ENCODE measurements at regions of chr2 and their contacts with region 1.

Region 1: GRCh38 chr2:75676464-75676863 is 29.9 kb downstream of the MRPL19 start:
- DNase-seq: no peak
- H3K4me3 ChIP-seq: no peak overlapping the region
- H3K27ac ChIP-seq: no peak overlapping the region
- H3K4me1 ChIP-seq: no peaks in the 10 kb centered on the region
- CTCF ChIP-seq: no peak

Region 2: GRCh38 chr2:75375646-75376582 is 300.6 kb before region 1 on chr2:
- CTCF ChIA-PET with region 1: no interaction called
- POLR2A ChIA-PET with region 1: no interaction called
- intact Hi-C with region 1: no loop called
- DNase-seq: no peak
- H3K4me3 ChIP-seq: no peak overlapping the region
- H3K27ac ChIP-seq: no peak overlapping the region
- H3K4me1 ChIP-seq: no peaks in the 10 kb centered on the region
- CTCF ChIP-seq: no peak

Region 3: DNA sequence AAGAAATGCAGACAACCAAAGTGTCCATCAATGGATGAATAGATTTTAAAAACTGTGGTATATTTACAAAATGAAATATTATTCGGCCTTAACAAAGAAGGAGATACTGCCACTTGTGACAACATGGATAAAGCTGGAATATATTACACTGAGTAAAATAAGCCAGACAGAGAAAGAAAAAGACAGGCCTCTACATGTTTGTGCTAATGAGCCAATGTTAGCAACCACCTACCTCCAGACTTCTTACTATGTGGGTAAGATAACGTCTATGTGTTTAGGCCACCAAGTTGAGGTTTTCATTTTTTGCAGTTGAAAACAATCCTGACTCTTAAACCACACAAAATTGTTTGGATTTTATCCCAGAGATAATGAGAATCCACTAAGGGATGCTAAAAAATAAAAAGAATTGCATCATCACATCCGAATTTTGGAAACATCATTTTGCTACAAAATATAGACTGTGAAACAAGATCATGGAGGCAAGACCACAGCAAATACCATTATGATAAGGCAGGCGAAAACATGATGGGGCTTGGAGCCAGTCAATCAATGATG is 162.8 kb before region 1 on chr2:
- CTCF ChIA-PET with region 1: no interaction called
- POLR2A ChIA-PET with region 1: no interaction called
- intact Hi-C with region 1: no loop called
- DNase-seq: no peak
- H3K4me3 ChIP-seq: no peak overlapping the region
- H3K27ac ChIP-seq: no peak overlapping the region
- H3K4me1 ChIP-seq: no peaks in the 10 kb centered on the region
- CTCF ChIP-seq: no peak

Region 4: GRCh38 chr2:75640621-75641121 is 35.8 kb before region 1 on chr2:
- CTCF ChIA-PET with region 1: no interaction called
- POLR2A ChIA-PET with region 1: no interaction called
- intact Hi-C with region 1: loop called (anchors 1 kb)
- DNase-seq: peak; percentile 59
- H3K4me3 ChIP-seq: no peak overlapping the region
- H3K27ac ChIP-seq: no peak overlapping the region
- H3K4me1 ChIP-seq: no peaks in the 10 kb centered on the region
- CTCF ChIP-seq: peak; percentile 98

Region 5: GRCh38 chr2:75772908-75773630 is 96.6 kb after region 1 on chr2:
- CTCF ChIA-PET with region 1: no interaction called
- POLR2A ChIA-PET with region 1: no interaction called
- intact Hi-C with region 1: no loop called
- DNase-seq: no peak
- H3K4me3 ChIP-seq: no peak overlapping the region
- H3K27ac ChIP-seq: no peak overlapping the region
- H3K4me1 ChIP-seq: no peaks in the 10 kb centered on the region
- CTCF ChIP-seq: no peak

Region 6: GRCh38 chr2:76050196-76050595 is 373.7 kb after region 1 on chr2:
- CTCF ChIA-PET with region 1: no interaction called
- POLR2A ChIA-PET with region 1: no interaction called
- intact Hi-C with region 1: no loop called
- DNase-seq: no peak
- H3K4me3 ChIP-seq: no peak overlapping the region
- H3K27ac ChIP-seq: no peak overlapping the region
- H3K4me1 ChIP-seq: no peaks in the 10 kb centered on the region
- CTCF ChIP-seq: peak; percentile 26; the same call in 1 of the 2 replicates